ENCODE measurements at regions of chr2 and their contacts with region 1.

Region 1: DNA sequence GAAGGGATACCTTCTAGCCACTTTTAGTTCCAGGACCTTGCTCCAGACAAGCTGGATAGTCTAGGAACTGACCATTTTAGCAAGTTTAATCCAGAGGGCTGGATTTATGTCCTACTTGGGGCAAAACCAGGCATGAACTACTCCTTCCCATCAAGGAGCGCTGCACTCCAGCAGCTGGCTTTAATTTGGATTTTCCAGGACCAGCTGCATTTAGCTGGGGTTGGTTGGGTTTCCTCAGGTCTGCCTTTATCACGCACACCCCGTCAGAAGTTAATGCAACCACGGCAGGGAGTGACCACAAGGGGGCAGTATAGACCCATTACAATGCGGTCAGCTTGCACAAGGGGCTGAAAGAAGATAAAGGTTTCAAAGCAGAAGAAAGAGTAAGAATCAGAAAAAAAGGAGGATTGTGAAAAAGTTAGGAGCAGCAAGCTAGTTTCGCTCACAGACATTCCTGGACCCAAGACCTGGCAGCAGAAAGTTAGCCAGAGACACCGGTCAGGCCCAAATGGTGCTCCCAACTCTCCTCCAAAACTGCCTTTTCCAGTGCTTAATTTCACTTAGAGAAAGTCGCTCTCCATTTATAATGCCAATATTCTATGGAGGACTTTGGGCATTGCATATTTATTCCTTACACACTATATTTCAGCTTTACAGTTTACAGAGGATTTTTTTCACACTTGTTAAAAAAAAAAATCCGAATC is 40.1 kb downstream of the SLC4A1AP start:
- DNase-seq: peak in 3 of 4 donors; percentile 81 to 90 (median 82)
- ATAC-seq: peak; percentile 71
- H3K4me3 ChIP-seq: no peak overlapping the region
- H3K27ac ChIP-seq: peak overlapping the region in 1 of 2 donors; percentile 28
- H3K4me1 ChIP-seq: peaks cover 23 to 60% of the 10 kb centered on the region in 2 donors
- H3K27me3 ChIP-seq: no peaks in the 10 kb centered on the region
- CTCF ChIP-seq: peak; percentile 90 to 95

Region 2: GRCh38 chr2:27545348-27546141 is 158.2 kb before region 1 on chr2:
- intact Hi-C with region 1: no loop called
- DNase-seq: no peak
- ATAC-seq: no peak
- H3K4me3 ChIP-seq: no peak overlapping the region
- H3K27ac ChIP-seq: no peak overlapping the region
- H3K4me1 ChIP-seq: no peaks in the 10 kb centered on the region
- H3K27me3 ChIP-seq: no peaks in the 10 kb centered on the region
- CTCF ChIP-seq: no peak

Region 3: GRCh38 chr2:28392297-28393113 is 688.7 kb after region 1 on chr2 and contains the start of gene FOSL2:
- intact Hi-C with region 1: loop called in 1 of 2 experiments (anchors 10 kb)
- DNase-seq: peak; percentile 98 to 99 (median 98)
- ATAC-seq: peak; percentile 72
- H3K4me3 ChIP-seq: peak within 1 kb of the TSS; percentile 72 to 93
- H3K27ac ChIP-seq: peak within 1 kb of the TSS; percentile 99 to 100
- H3K4me1 ChIP-seq: peaks cover under 1 to 38% of the 10 kb centered on the region in 2 donors
- H3K27me3 ChIP-seq: no peaks in the 10 kb centered on the region
- CTCF ChIP-seq: no peak
- polyA plus RNA-seq, gene FOSL2: 11.7 to 17.4 (median 14.4) TPM

Region 4: DNA sequence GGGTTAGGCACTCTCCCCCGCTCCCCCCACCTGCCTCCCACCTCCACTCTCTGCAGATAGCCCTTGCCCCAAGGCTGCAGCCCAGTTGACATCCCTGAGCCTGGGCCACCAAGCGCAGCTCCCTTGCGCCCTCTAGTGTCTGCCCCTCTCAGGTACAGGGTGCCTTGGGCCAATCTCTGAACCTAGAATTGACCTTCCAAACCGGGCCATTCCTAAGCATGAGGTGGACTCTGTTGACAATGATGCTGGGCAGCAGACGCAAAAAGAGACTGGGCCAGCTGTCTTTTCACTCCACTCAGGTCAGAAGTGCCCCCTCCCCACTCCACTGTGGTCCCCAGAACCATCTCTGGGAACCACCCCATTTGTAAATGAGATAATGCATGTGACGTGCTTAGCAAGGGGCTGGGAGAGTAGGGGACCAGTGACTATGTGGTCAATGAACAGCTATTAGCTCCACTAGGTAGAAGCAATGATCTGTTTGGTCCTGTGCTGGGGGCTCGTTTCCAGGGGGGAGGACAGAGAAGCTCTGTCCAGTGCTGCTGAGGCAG is 748.8 kb after region 1 on chr2:
- intact Hi-C with region 1: loop called in 1 of 2 experiments (anchors 5 kb)
- DNase-seq: peak; percentile 22 to 92 (median 66)
- ATAC-seq: peak; percentile 91
- H3K4me3 ChIP-seq: no peak overlapping the region
- H3K27ac ChIP-seq: no peak overlapping the region
- H3K4me1 ChIP-seq: peaks cover 0 to 32% of the 10 kb centered on the region in 2 donors
- H3K27me3 ChIP-seq: no peaks in the 10 kb centered on the region
- CTCF ChIP-seq: peak; percentile 72 to 94

Measured in left lung (tissue), 14 donors.